Activated CD4-positive, alpha-beta T cell treated with anti-CD3 and anti-CD28 coated beads for 36 hours (primary cell): ENCODE measurements at regions of chr14 and their contacts with region 1.

Region 1: DNA sequence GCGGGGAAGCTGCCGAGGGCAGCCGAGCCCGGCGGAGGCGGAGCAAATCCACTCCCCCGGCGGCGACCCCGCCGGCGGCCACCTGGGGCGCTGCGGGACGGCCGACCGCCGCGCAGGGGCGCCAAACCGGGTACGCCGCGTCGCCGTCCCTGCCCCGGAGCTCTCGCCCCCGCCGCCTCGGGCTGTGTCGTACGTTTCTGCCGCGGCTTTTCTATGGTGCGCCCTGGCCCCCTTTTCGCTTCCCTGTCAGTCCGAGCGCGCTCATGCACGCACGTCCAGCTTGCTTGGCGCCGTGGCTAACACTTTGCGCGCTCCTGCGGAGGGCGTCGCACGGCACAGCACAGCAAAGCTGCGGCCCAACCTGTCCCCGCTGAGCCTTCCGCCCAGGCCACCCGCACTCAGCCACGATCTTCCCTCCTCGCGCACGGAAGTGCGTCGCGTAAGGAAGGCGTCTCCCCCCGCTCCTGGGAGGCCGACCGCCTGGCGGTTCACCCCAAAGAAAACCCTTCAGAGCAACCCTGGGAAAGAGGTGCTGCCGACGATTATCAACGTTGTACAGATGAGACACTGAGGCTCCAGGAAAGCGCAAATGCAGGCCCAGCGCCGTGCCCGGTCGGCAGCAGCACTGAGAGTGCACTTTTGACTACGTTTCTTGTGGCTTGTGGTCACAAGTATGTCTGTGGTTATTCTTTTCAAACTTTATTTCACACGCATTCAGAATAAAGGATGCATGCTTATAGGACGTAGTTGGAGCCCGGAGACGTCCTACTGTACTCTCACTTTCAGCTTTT is at the start of gene HECTD1:
- DNase-seq: peak; percentile 94
- ATAC-seq: peak; percentile 77
- H3K4me3 Mint-ChIP-seq: peak within 1 kb of the TSS; percentile 85
- H3K27ac Mint-ChIP-seq: peak within 1 kb of the TSS; percentile 99
- H3K4me1 Mint-ChIP-seq: peaks cover 38% of the 10 kb centered on the region
- H3K27me3 Mint-ChIP-seq: no peaks in the 10 kb centered on the region
- total RNA-seq, gene HECTD1: 87.1 to 89.5 TPM

Region 2: DNA sequence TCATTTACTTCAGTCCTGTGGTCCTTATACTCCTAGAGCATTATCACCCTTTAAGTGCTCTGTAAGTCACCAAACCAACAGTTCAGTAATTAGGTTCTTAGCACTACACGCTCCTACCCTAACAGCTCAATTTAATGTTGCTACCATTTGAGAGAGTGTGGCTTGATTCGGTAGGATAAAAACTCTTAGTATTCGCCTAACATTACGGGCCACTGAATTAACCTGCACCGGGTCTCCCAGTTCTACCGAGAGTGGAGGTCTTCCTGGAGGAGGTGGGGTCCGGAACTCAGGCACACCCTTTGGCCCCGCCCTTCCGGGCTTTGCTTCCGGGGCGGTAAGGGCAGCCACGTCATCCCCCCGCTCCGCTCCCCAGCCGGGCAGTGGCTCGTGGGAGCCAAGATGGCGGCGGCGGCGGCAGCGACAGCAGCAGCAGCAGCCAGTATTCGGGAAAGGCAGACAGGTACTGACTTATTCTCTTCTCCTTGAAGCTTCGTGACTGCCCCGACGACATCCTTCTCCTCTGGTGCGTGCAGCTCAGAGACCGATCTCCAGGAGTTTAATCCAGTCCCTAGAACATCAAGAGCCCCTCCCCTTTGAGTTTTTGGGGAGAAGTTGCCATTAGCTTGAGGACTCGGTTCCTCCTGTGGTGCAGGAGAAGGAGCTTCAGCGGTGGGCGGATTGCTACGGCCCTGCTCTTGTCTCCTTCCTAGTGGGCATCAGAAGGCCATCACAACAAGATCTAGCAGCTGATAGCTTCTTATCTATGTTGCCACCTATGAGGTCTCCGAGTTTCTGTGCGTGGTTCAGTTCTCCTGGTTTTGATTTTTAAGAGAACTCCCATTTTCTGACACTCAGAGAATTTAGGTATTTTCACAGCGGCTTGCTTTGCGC is 585.8 kb before region 1 on chr14 and contains the start of gene SCFD1:
- CTCF ChIA-PET with region 1: no interaction called
- POLR2A ChIA-PET with region 1: no interaction called
- intact Hi-C with region 1: loop called in 1 of 2 experiments (anchors 1 kb)
- DNase-seq: peak; percentile 97
- ATAC-seq: peak; percentile 98
- H3K4me3 Mint-ChIP-seq: peak within 1 kb of the TSS; percentile 78
- H3K27ac Mint-ChIP-seq: peak within 1 kb of the TSS; percentile 90
- H3K4me1 Mint-ChIP-seq: peaks cover 39% of the 10 kb centered on the region
- H3K27me3 Mint-ChIP-seq: no peaks in the 10 kb centered on the region
- total RNA-seq, gene SCFD1: 47.5 to 55.3 TPM

Region 3: DNA sequence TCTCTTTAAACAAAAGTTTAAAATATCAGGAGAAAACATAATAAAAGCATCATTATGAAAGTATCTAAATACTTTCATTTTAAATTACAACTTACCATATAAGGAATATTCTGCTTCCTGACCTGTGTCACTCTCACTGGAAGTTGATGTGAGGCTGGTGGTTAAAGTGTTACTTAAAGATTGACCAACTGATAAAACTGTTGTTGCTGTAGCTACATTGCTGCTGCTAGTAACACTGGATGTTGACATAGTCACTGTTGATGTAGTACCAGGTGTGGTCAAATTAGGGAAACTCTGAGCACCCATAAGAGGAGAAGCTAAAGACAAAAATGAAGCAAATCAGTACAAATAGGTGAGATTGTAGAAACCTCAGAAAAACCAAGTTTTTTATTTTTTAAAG is 80.3 kb before region 1 on chr14:
- CTCF ChIA-PET with region 1: interaction called, 3 read pairs
- POLR2A ChIA-PET with region 1: no interaction called
- intact Hi-C with region 1: loop called (anchors 2 kb)
- DNase-seq: peak; percentile 8
- ATAC-seq: peak; percentile 93
- H3K4me3 Mint-ChIP-seq: no peak overlapping the region
- H3K27ac Mint-ChIP-seq: peak overlapping the region; percentile 1
- H3K4me1 Mint-ChIP-seq: peaks cover 31% of the 10 kb centered on the region
- H3K27me3 Mint-ChIP-seq: no peaks in the 10 kb centered on the region

Region 4: GRCh38 chr14:31360919-31361662 is 153.1 kb after region 1 on chr14:
- CTCF ChIA-PET with region 1: interaction called, 3 read pairs
- POLR2A ChIA-PET with region 1: no interaction called
- intact Hi-C with region 1: loop called (anchors 1 to 5 kb)
- DNase-seq: no peak
- ATAC-seq: no peak
- H3K4me3 Mint-ChIP-seq: no peak overlapping the region
- H3K27ac Mint-ChIP-seq: no peak overlapping the region
- H3K4me1 Mint-ChIP-seq: no peaks in the 10 kb centered on the region
- H3K27me3 Mint-ChIP-seq: no peaks in the 10 kb centered on the region

Region 5: DNA sequence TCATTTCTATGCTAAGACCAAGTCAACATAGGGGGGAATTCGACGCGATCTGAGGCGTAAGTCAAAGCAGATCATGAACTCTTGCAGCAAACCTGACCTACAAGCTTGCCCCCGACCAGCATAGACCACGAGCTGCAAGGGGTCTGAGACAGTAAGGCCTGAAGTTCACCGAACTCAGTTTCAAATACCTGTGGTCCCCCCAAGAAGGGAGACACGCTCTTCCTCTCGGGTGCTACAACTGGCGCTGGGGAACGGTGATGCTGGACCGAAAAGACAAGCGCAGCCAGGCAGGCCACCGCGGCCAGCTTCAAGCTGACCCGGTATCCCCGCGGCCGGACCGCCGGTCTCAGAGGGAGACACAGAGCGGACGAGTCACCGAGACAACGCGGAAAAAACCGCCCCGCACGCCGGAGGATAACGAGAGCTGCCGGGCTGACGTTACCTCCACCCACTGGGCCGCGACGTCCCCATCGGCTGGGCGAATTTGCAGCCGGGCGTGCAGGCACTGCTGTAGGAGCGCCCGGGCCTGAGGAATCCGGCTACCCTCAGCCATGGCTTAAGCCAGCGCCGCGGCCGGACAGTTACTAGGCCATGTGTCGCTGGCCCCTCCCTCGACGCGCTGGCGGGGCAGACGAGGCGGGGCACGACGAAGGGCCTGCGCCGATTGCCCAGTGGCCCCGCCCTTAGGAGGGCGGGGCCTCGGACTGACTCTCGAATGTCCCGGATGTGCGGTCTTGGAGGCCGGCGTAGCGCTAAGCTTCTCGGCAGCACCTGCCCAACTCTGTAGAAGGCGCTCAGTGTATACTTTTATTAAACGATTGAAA is 249.1 kb after region 1 on chr14 and contains the start of gene DTD2:
- CTCF ChIA-PET with region 1: no interaction called
- POLR2A ChIA-PET with region 1: no interaction called
- intact Hi-C with region 1: loop called (anchors 1 kb)
- DNase-seq: peak; percentile 95
- ATAC-seq: peak; percentile 99
- H3K4me3 Mint-ChIP-seq: peak within 1 kb of the TSS; percentile 98
- H3K27ac Mint-ChIP-seq: peak within 1 kb of the TSS; percentile 95
- H3K4me1 Mint-ChIP-seq: peaks cover 22% of the 10 kb centered on the region
- H3K27me3 Mint-ChIP-seq: peaks cover 2% of the 10 kb centered on the region
- total RNA-seq, gene DTD2: 17.5 to 21.6 TPM